ENCODE measurements at regions of chr19 and their contacts with region 1.

Region 1: GRCh38 chr19:17205237-17206140 is 9.7 kb upstream of the USE1 start:
- DNase-seq: peak; percentile 44 to 74
- ATAC-seq: peak; percentile 58 to 78 (median 60)
- H3K4me3 ChIP-seq: no peak overlapping the region
- H3K4me3 Mint-ChIP-seq: no peak overlapping the region
- H3K27ac ChIP-seq: no peak overlapping the region
- H3K27ac Mint-ChIP-seq: no peak overlapping the region
- H3K4me1 ChIP-seq: peaks cover 3% of the 10 kb centered on the region
- H3K4me1 Mint-ChIP-seq: peaks cover 0 to 4% of the 10 kb centered on the region in 2 donors
- H3K27me3 ChIP-seq: no peaks in the 10 kb centered on the region
- H3K27me3 Mint-ChIP-seq: no peaks in the 10 kb centered on the region
- CTCF ChIP-seq: peak; percentile 30

Region 2: DNA sequence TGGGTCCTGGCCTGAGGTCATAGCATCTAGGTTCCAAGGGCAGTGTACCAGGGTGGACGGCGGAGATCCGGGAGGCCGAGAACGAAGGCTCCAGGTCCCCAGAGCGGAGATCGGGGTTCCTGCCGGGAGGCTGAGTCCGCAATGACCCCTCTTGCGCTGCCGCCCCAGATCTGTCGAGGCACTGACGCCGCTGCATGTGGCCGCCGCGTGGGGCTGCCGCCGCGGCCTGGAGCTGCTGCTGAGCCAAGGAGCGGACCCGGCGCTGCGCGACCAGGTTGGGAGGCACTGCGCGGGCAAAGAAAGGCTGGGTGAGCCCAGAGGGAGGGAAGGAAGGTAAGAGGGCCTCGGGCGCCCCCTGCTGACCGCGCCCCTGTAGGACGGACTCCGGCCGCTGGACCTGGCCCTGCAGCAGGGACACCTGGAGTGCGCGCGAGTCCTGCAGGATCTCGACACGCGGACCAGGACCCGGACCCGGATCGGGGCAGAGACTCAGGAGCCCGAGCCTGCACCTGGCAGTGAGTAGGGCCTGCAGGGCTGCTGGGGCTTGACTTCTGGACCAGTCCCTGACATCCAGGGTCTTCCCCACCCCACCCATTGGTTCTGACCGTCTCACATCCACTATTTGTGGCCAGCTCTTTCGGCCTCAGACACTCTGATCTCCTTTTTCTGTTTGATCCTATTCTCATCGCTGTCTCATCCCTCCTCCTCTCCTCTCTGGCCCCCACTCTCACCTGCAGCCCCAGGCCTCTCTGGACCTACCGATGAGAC is 77.2 kb after region 1 on chr19:
- intact Hi-C with region 1: loop called (anchors 1 kb)
- DNase-seq: peak; percentile 76 to 87
- ATAC-seq: peak; percentile 92 to 98 (median 96)
- H3K4me3 ChIP-seq: peak overlapping the region; percentile 31
- H3K4me3 Mint-ChIP-seq: peak overlapping the region; percentile 74
- H3K27ac ChIP-seq: no peak overlapping the region
- H3K27ac Mint-ChIP-seq: no peak overlapping the region
- H3K4me1 ChIP-seq: peaks cover 19% of the 10 kb centered on the region
- H3K4me1 Mint-ChIP-seq: peaks cover 0 to 14% of the 10 kb centered on the region in 2 donors
- H3K27me3 ChIP-seq: peaks cover 12% of the 10 kb centered on the region
- H3K27me3 Mint-ChIP-seq: peaks cover 0 to 22% of the 10 kb centered on the region in 2 donors
- CTCF ChIP-seq: peak; percentile 86

Measured in natural killer cell (primary cell).